ENCODE measurements at regions of chr17 and their contacts with region 1.

Region 1: DNA sequence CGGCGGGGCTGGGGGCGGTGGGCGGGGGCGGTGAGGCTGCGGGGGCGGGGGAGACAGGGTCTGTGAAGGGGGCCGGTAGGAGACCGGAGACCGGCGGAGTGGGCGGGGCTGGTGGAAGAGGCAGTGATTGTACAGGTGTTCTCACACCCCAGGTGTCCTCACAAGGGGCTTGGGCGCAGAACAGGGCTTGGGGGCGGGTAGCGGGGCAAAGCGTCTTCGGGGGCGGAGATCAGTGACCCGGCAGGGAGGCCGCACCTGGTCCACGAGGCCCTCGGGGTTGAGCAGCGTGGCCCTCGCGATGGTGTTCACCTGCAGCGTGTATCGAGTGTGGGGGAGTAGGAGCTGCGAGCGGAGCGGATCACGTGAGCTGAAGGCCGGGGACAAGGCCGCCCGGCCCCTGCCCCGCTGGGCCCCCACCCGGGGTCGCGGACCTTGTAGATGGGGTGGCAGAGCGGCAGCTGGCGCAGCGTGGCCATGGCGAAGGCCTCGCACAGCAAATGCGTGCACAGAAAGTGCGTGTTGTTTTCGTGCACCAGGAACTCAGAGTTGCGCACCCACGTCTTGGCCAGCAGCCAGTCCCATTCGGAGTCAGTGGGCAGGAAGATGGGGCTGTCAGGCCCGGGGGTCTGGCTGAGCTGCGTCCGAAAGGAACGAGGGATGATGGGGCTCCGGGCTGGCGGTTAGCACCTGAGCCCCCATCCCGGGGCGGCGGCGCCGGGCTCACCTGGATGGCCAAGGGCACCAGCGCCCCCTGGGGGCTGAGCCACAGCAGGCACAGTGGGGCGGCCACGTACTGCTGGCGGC is 8.5 kb downstream of the ALOXE3 start:
- DNase-seq: no peak
- H3K4me3 ChIP-seq: no peak overlapping the region
- CTCF ChIP-seq: peak; percentile 58

Region 2: GRCh38 chr17:8005960-8006730 is 103.7 kb before region 1 on chr17:
- in situ Hi-C with region 1: loop called (anchors 5 kb)
- DNase-seq: no peak
- H3K4me3 ChIP-seq: no peak overlapping the region
- CTCF ChIP-seq: no peak

Region 3: DNA sequence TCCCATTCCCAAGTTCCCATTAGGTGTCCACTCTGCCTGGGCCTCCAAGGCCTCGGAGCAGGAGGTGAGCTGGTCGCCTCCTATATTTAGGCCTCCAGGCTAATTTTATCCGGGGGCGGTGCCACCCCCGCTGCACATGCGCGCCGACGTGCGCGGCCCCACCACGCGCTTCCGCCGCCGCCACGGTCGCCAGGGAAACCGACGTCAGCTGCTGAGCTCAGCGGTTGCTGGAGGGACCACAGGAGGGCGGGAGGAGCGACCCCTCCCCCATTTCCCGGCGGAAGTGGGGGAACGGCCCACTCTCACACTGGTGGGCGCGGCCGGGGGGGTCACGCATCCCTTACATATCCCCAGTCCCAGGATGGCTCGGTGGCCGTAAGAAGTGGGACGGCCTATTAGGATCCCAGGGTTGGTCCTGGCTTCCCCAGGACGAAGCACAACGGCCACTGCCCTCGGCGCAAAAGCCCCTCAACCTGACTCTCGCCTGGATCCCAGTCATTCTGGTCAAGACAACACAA is 41.3 kb after region 1 on chr17:
- in situ Hi-C with region 1: loop called (anchors 5 kb)
- DNase-seq: peak; percentile 79
- H3K4me3 ChIP-seq: peak overlapping the region; percentile 94
- CTCF ChIP-seq: no peak

Region 4: DNA sequence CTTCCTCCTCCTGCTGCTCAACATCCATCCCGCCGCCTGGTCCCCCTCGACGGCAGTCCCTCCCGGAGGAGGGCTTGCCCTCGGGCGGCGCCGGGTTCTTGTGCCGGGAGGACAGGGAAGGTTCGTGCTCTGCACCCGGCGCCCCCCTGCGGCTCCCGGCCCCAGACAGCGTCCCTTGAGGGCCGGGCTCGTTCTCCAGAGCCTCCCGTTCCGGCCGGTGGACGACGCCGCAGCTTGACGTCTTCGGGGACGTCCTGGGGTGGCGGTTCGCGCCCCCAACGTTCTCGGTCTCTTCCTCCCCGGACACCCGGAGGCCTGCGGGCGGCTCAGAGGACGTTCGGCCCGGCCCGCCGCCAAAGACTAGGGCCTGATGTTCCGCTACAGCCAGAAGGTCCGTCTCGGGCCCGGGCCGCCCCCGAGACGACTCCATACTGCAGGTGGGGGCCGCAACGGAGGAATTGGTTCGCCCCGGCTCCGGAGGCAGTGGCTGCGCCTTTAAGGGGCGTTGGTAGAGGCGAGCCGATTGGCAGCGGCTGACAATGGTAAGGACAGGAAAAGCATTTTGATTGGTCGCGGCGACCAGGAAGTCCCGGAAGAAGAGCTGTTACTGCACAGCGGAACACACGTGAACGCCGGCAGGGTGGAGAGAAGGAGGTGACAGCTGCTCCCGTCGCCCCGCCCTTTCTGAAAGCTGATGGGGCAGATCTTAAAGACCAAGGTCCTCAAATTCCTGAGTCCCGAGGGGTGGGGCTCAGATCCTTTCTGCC is 80.0 kb after region 1 on chr17 and contains the start of gene BORCS6:
- in situ Hi-C with region 1: no loop called
- DNase-seq: peak; percentile 95
- H3K4me3 ChIP-seq: peak within 1 kb of the TSS; percentile 96
- CTCF ChIP-seq: no peak

Measured in astrocyte of the cerebellum (primary cell).